ENCODE measurements at regions of chr15 and their contacts with region 1.

Region 1: GRCh38 chr15:41774062-41774881 is at the start of gene MAPKBP1:
- DNase-seq: peak; percentile 98
- H3K4me3 Mint-ChIP-seq: peak within 1 kb of the TSS; percentile 90
- H3K27ac Mint-ChIP-seq: peak within 1 kb of the TSS; percentile 93
- H3K4me1 Mint-ChIP-seq: peaks cover 60% of the 10 kb centered on the region
- H3K27me3 Mint-ChIP-seq: no peaks in the 10 kb centered on the region
- total RNA-seq, gene MAPKBP1: 29.8 to 31.2 TPM

Region 2: GRCh38 chr15:41789236-41789635 is 15.0 kb after region 1 on chr15:
- CTCF ChIA-PET with region 1: interaction called, 18 read pairs
- POLR2A ChIA-PET with region 1: interaction called, 3 read pairs
- DNase-seq: no peak
- H3K4me3 Mint-ChIP-seq: no peak overlapping the region
- H3K27ac Mint-ChIP-seq: no peak overlapping the region
- H3K4me1 Mint-ChIP-seq: peaks cover 46% of the 10 kb centered on the region
- H3K27me3 Mint-ChIP-seq: no peaks in the 10 kb centered on the region

Region 3: GRCh38 chr15:41811432-41812195 is 37.3 kb after region 1 on chr15:
- CTCF ChIA-PET with region 1: interaction called, 166 read pairs
- POLR2A ChIA-PET with region 1: interaction called, 3 read pairs
- DNase-seq: peak; percentile 77
- H3K4me3 Mint-ChIP-seq: no peak overlapping the region
- H3K27ac Mint-ChIP-seq: peak overlapping the region; percentile 1
- H3K4me1 Mint-ChIP-seq: peaks cover 30% of the 10 kb centered on the region
- H3K27me3 Mint-ChIP-seq: no peaks in the 10 kb centered on the region

Region 4: DNA sequence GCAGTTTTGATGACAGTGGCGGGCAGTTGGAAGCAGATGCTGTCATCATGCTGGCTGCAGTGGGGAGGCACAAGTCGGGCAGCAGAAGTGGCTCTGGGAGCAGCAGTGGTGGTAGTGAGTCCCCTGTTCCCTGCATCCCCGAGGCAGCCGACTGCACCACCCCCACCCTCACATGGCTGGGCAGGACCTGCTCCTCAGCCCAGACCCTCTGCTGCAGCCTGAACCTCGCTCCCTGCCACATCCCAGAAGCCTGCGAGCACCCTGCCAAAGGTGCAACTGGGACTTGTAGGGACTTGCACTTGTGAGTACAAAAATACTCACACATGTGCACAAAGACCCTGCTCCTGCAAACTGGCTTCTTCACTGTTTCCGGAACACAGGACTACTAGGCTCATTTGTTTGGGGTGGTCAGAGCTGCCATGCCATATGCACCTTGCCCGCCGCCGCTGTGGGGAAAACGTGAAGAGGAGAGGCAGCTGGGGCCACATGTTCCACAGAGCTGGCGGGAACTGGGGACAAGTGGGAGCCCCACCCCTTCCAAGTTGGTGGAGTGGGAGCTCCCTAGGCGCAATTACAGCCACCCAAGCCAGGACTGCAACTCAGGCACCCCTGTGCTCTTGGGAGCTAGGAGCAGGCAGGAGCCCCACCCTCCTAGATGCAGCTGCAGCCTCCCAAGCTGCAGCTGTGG is 55.8 kb after region 1 on chr15:
- CTCF ChIA-PET with region 1: interaction called, 15 read pairs
- POLR2A ChIA-PET with region 1: no interaction called
- DNase-seq: no peak
- H3K4me3 Mint-ChIP-seq: no peak overlapping the region
- H3K27ac Mint-ChIP-seq: no peak overlapping the region
- H3K4me1 Mint-ChIP-seq: peaks cover 58% of the 10 kb centered on the region
- H3K27me3 Mint-ChIP-seq: no peaks in the 10 kb centered on the region

Region 5: DNA sequence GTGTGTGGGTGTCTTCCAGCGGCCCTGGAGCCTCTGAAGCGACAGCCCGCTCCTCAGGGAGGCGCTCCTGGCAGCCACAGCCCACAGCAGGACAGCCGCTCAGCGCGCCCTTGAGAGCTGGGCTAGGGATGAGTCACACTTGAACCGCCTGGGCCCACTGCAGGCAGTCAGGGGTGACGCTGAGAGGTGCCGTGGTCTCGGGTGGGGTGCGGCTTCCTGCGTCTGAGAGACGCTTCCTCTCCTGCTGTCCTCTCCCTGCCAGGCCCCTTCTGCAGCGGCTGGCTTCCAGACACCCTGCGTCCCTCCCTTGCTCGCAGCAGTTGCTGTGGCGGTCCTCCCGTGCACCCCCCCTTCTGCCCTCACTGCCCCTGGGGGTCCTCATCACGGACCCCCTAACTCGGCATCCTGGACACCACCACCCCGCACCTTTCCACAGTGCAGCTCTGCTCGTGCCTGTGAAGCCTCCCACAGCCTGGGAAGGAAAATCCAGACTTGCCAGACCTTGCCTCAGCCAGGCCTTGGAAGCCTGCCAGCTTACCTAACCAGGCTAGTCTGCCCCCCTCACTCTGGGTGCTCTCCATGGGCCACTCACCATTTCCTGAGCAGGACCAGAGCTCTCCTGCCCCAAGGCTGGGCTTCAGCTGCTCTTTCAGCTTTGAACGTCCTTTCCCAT is 120.7 kb after region 1 on chr15:
- CTCF ChIA-PET with region 1: interaction called, 14 read pairs
- POLR2A ChIA-PET with region 1: interaction called, 4 read pairs
- DNase-seq: peak; percentile 86
- H3K4me3 Mint-ChIP-seq: peak overlapping the region; percentile 48
- H3K27ac Mint-ChIP-seq: peak overlapping the region; percentile 94
- H3K4me1 Mint-ChIP-seq: peaks cover 53% of the 10 kb centered on the region
- H3K27me3 Mint-ChIP-seq: no peaks in the 10 kb centered on the region

Region 6: DNA sequence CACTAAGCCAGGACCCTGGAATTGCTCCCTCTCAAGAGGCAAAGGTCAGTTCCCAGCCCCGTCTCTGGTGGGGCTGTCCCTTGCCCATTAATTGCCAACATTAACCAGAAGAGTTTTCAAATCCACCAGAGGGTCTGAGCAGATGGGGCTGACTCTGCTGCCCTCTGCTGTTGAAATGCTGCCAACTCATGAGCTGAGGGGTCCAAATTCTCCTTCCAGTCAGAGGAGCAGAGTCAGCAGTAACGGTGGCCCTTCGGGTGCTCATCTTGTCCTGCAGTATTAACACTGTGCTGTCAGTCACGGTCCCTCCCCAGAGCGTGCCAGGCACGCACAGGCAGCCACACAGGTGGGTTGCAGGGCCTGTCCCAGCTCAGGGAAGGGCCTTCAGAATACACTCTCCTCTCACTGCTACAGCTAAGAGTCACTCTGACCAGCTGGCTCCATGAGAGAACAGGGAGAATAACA is 130.3 kb after region 1 on chr15:
- CTCF ChIA-PET with region 1: interaction called, 25 read pairs
- POLR2A ChIA-PET with region 1: interaction called, 4 read pairs
- DNase-seq: peak; percentile 78
- H3K4me3 Mint-ChIP-seq: no peak overlapping the region
- H3K27ac Mint-ChIP-seq: peak overlapping the region; percentile 62
- H3K4me1 Mint-ChIP-seq: peaks cover 13% of the 10 kb centered on the region
- H3K27me3 Mint-ChIP-seq: no peaks in the 10 kb centered on the region

Measured in activated CD4-positive, alpha-beta T cell treated with anti-CD3 and anti-CD28 coated beads, Interleukin-2, amount 10 ng/mL, durations not matched to agents 7 days and 5 days (primary cell).